ENCODE measurements at regions of chr2 and their contacts with region 1.

Region 1: GRCh38 chr2:67476809-67477790 is 80.0 kb downstream of the ETAA1 start:
- DNase-seq: peak; percentile 76
- ATAC-seq: peak; percentile 90
- H3K4me3 ChIP-seq: no peak overlapping the region
- H3K27ac ChIP-seq: peak overlapping the region; percentile 5
- H3K4me1 ChIP-seq: peaks cover 12% of the 10 kb centered on the region
- H3K27me3 ChIP-seq: no peaks in the 10 kb centered on the region
- CTCF ChIP-seq: peak; percentile 81

Region 2: GRCh38 chr2:66585596-66585995 is 891.5 kb before region 1 on chr2:
- CTCF ChIA-PET with region 1: no interaction called
- POLR2A ChIA-PET with region 1: no interaction called
- intact Hi-C with region 1: loop called (anchors 2 kb)
- DNase-seq: no peak
- ATAC-seq: no peak
- H3K4me3 ChIP-seq: no peak overlapping the region
- H3K27ac ChIP-seq: no peak overlapping the region
- H3K4me1 ChIP-seq: no peaks in the 10 kb centered on the region
- H3K27me3 ChIP-seq: peaks cover 36% of the 10 kb centered on the region
- CTCF ChIP-seq: no peak

Region 3: DNA sequence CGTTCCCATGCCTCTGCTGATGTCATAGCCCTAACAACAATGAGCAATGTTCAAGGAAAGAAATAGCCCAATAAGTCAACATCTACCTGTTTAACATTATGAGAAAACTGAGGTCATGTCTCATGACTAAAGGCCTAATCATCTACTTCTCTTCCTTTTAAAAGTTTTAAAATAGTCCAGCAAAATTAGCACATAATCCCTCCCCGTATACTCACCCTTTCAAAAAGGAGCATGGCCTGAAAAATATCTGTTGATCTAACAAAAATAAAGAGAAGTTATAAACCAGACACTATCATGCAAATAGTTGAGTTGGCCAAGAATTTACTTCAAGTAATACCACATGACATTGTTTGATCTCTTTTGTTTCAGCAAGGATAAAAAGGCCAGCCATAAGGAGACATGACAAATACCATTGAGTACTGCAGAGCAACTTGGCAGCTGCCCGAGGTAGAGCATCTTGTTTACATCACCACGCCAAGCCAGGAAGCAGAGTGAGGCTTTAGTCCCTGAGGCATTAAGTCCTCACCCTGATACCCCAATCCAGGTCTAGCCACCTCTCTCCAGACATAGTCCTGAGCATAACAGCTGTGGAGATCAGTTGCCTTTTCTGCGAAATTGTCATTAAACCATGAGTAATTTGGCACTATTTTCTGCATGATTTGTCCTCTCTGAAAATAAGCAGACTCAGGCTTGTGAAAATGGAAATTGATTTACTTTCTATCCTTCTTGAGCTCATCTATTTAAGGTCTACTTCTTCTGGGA is 217.3 kb before region 1 on chr2:
- CTCF ChIA-PET with region 1: no interaction called
- POLR2A ChIA-PET with region 1: no interaction called
- intact Hi-C with region 1: no loop called
- DNase-seq: peak; percentile 86
- ATAC-seq: peak; percentile 66
- H3K4me3 ChIP-seq: no peak overlapping the region
- H3K27ac ChIP-seq: peak overlapping the region; percentile 97
- H3K4me1 ChIP-seq: peaks cover 56% of the 10 kb centered on the region
- H3K27me3 ChIP-seq: no peaks in the 10 kb centered on the region
- CTCF ChIP-seq: no peak

Region 4: DNA sequence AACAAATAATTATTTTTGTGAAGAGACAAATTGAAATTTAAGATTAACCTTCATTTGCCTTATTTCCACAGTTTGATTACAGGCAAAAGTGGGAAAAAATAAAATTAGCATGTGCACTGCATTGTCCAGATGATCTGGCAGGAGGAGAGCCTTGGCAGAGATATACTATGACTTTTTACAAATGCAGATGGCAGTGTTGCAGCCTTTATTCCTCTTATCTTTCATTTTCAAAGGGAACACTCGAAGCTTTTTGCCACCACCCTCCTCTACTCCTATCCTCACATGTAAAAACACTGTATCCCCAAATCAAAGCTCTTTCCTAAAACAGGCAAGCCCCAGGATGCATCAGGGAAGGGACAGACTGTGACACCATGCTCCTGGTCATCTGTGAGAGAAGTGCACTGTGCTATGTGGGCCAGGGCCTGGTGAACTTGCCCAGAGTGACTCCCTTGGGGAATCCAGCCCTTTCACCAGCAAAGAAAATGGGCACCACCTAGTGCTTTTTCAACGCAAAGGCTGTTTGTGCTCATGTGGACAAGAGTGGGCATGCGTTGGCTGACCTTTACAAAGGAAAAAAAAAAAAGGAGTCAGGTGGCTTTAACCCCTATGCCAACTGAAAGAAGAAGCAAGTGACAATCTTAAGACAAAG is 154.6 kb before region 1 on chr2:
- CTCF ChIA-PET with region 1: interaction called, 17 read pairs
- POLR2A ChIA-PET with region 1: no interaction called
- intact Hi-C with region 1: loop called (anchors 1 kb)
- DNase-seq: peak; percentile 79
- ATAC-seq: peak; percentile 93
- H3K4me3 ChIP-seq: no peak overlapping the region
- H3K27ac ChIP-seq: peak overlapping the region; percentile 44
- H3K4me1 ChIP-seq: no peaks in the 10 kb centered on the region; the same call in 1 of the 2 replicates
- H3K27me3 ChIP-seq: no peaks in the 10 kb centered on the region
- CTCF ChIP-seq: peak; percentile 88

Region 5: DNA sequence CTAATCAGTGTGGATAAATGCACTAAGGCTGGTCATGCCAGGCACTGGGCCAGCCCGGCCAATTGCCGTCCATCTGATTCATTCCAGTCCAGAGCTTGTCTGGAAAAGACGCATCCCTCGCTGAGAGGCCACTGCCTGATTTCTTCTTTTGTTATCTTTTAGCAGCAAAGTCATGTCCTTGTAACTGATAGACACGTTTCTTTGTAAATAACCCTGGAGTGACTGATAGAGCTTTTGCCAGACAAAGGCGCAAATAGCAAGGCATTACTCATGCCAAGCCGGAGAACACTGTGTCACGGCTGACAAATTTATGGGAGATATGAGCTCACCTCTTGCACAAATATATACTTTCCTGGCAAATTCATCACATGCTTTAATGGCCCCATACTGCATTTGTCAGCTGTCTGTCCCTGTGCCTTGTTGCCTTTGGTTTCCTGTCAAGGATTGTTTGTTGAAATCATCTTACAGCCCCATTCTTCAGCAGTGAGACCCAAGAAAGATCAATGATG is 84.4 kb after region 1 on chr2:
- CTCF ChIA-PET with region 1: no interaction called
- POLR2A ChIA-PET with region 1: no interaction called
- intact Hi-C with region 1: loop called (anchors 2 kb)
- DNase-seq: peak; percentile 95
- ATAC-seq: peak; percentile 79
- H3K4me3 ChIP-seq: no peak overlapping the region
- H3K27ac ChIP-seq: peak overlapping the region; percentile 63
- H3K4me1 ChIP-seq: peaks cover 51% of the 10 kb centered on the region
- H3K27me3 ChIP-seq: no peaks in the 10 kb centered on the region
- CTCF ChIP-seq: no peak

Region 6: DNA sequence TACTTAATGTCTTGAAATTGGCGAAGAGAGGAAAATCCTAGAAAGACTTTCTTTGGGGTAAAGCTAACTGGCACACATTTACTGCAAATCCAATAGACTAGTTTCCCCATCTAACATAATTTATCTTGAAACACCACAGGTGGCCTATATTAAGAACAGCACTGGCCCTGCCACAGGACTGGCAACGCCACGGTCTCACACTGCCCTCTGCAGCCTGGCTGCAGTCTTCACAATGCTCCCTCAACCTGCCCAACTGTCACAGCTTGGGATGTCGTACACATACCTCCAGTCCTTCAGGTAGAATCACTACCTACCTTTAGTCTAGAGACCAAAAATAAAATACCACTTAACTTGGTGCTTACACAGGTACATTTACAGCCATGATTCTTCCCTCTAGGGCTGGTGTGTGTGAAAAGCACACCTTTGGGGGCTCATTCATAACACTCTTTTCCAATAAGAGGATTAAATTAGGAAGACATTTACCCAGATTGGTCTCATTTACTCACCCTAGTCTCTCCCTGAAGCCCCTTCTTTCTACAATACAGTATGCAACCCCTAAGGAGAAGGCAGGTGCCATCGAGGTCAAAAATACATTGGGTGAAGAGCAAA is 363.5 kb after region 1 on chr2:
- CTCF ChIA-PET with region 1: no interaction called
- POLR2A ChIA-PET with region 1: no interaction called
- intact Hi-C with region 1: loop called (anchors 2 kb)
- DNase-seq: peak; percentile 84
- ATAC-seq: peak; percentile 99
- H3K4me3 ChIP-seq: no peak overlapping the region
- H3K27ac ChIP-seq: no peak overlapping the region
- H3K4me1 ChIP-seq: peaks cover 9% of the 10 kb centered on the region
- H3K27me3 ChIP-seq: no peaks in the 10 kb centered on the region
- CTCF ChIP-seq: peak; percentile 97

Measured in PC-3 (cell line).